GM12878 (cell line): ENCODE measurements at regions of chr9 and their contacts with region 1.

Region 1: DNA sequence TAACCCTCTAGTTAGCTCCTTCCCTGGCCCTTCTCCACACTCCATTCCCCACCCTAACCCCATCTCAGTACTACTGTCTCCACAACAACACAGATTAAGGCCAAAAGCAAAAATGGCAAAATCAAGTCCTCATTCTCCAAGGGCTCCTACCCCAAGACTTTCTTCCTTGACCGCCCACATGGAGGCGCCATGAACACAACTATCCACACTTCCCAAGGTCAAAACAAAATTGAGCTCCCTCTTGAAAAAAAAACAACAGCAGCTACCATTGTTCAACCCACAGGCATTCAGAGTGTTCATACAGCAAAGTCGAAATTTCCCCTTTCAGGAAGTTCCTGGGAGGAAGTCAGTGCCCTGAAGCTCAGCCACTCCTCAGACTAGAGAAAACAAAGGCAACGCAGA is 54.4 kb downstream of the GNAQ start:
- DNase-seq: no peak
- ATAC-seq: peak; percentile 44
- H3K4me3 ChIP-seq: no peak overlapping the region
- H3K27ac ChIP-seq: no peak overlapping the region
- H3K4me1 ChIP-seq: no peaks in the 10 kb centered on the region
- H3K27me3 ChIP-seq: 0 out of 4 replicates have a peak, but pooled peaks cover 0 to 2% of the 10 kb centered on the region in 2 experiments
- CTCF ChIP-seq: peak; percentile 24 to 44 (median 35); a peak in 4 of 6 replicates
- EP300 ChIP-seq: no peak
- POLR2A ChIP-seq: no peak
- RAD21 ChIP-seq: peak; percentile 44

Region 2: DNA sequence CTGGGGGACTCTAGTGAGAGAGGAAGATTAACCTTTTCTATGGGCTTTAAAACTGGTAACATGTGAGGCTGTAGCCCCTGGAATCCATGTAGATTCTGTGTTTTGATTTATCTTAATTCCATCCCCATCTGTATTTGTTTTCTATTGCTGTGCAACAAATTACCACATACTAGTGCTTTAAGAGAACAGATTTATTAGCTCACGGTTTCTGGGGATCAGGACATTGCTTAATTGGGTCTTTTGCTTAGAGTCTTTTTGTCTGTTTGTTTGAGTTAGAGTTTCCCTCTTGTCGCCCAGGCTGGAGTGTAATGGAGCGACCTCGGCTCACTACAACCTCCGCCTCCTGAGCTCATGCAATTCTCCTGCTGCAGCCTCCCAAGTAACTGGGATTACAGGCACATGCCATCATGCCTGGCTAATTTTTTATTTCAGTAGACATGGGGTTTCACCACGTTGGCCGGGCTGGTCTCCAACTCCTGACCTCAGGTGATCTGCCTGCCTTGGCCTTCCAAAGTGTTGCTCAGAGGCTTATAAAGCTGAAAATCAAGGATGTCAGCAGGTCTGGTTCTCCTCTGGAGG is 299.2 kb before region 1 on chr9:
- CTCF ChIA-PET with region 1: no interaction called
- POLR2A ChIA-PET with region 1: no interaction called
- RAD21 ChIA-PET with region 1: no interaction called
- SMC1A ChIA-PET with region 1: no interaction called
- in situ Hi-C with region 1: no loop called
- intact Hi-C with region 1: no loop called
- DNase-seq: no peak
- ATAC-seq: no peak
- H3K4me3 ChIP-seq: no peak overlapping the region
- H3K27ac ChIP-seq: no peak overlapping the region
- H3K4me1 ChIP-seq: no peaks in the 10 kb centered on the region
- H3K27me3 ChIP-seq: no peaks in the 10 kb centered on the region; a peak in 1 of 4 replicates
- CTCF ChIP-seq: no peak
- EP300 ChIP-seq: no peak
- POLR2A ChIP-seq: no peak
- RAD21 ChIP-seq: no peak

Region 3: GRCh38 chr9:77896938-77897667 is 80.1 kb before region 1 on chr9:
- CTCF ChIA-PET with region 1: interaction called, 5 read pairs
- POLR2A ChIA-PET with region 1: interaction called, 7 read pairs
- RAD21 ChIA-PET with region 1: interaction called, 29 read pairs
- SMC1A ChIA-PET with region 1: interaction called, 23 read pairs
- in situ Hi-C with region 1: no loop called
- intact Hi-C with region 1: no loop called
- DNase-seq: no peak
- ATAC-seq: peak; percentile 36
- H3K4me3 ChIP-seq: no peak overlapping the region
- H3K27ac ChIP-seq: no peak overlapping the region
- H3K4me1 ChIP-seq: no peaks in the 10 kb centered on the region
- H3K27me3 ChIP-seq: no peaks in the 10 kb centered on the region
- CTCF ChIP-seq: peak in 2 of 3 experiments; percentile 6 to 7; a peak in 1 of 6 replicates
- EP300 ChIP-seq: no peak
- POLR2A ChIP-seq: no peak
- RAD21 ChIP-seq: no peak

Region 4: DNA sequence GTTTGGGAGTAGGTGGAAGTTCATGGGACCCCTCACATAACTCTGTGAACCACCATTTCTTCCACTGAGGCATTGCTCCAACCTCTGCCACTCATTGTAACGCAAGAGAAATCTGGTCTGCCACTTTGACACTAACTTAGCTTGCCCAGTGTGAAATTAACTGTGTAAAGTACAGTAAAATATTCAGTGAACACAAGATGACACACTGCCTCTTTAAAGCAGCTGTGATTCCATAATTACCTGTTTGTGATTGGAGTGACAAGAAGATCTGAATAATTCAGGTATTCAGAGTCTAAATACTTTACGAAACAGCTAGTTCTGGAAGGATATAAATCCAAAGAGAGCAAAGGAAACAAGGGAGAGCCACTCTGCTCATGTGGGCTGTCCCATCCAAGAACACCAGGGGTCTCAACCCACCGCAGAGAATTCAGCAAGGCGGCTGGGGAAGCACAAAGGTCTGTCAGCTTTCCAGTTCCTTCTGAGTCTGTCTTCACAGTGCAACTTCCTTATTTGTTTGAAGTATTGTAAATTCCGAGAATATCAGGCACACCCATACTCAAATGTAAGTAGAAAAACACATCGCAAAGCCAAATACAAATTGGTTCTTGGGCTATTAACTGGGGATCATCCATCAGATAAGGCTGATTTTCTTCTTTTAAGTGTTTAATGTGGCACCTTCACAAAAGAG is 32.5 kb before region 1 on chr9:
- CTCF ChIA-PET with region 1: interaction called, 4 read pairs
- POLR2A ChIA-PET with region 1: no interaction called
- RAD21 ChIA-PET with region 1: interaction called, 15 read pairs
- SMC1A ChIA-PET with region 1: interaction called, 19 read pairs
- in situ Hi-C with region 1: no loop called
- intact Hi-C with region 1: no loop called
- DNase-seq: no peak
- ATAC-seq: peak; percentile 27
- H3K4me3 ChIP-seq: no peak overlapping the region
- H3K27ac ChIP-seq: no peak overlapping the region
- H3K4me1 ChIP-seq: no peaks in the 10 kb centered on the region
- H3K27me3 ChIP-seq: no peaks in the 10 kb centered on the region
- CTCF ChIP-seq: no peak
- EP300 ChIP-seq: no peak
- POLR2A ChIP-seq: no peak
- RAD21 ChIP-seq: no peak

Region 5: GRCh38 chr9:77965445-77966123 is 11.6 kb before region 1 on chr9:
- CTCF ChIA-PET with region 1: interaction called, 10 read pairs
- POLR2A ChIA-PET with region 1: interaction called, 3 read pairs
- RAD21 ChIA-PET with region 1: interaction called, 13 read pairs
- SMC1A ChIA-PET with region 1: interaction called, 9 read pairs
- in situ Hi-C with region 1: no loop called
- intact Hi-C with region 1: no loop called
- DNase-seq: no peak
- ATAC-seq: peak; percentile 54
- H3K4me3 ChIP-seq: no peak overlapping the region
- H3K27ac ChIP-seq: no peak overlapping the region
- H3K4me1 ChIP-seq: no peaks in the 10 kb centered on the region
- H3K27me3 ChIP-seq: 0 out of 4 replicates have a peak, but pooled peaks cover 0 to 3% of the 10 kb centered on the region in 2 experiments
- CTCF ChIP-seq: no peak
- EP300 ChIP-seq: no peak
- POLR2A ChIP-seq: no peak
- RAD21 ChIP-seq: no peak

Region 6: DNA sequence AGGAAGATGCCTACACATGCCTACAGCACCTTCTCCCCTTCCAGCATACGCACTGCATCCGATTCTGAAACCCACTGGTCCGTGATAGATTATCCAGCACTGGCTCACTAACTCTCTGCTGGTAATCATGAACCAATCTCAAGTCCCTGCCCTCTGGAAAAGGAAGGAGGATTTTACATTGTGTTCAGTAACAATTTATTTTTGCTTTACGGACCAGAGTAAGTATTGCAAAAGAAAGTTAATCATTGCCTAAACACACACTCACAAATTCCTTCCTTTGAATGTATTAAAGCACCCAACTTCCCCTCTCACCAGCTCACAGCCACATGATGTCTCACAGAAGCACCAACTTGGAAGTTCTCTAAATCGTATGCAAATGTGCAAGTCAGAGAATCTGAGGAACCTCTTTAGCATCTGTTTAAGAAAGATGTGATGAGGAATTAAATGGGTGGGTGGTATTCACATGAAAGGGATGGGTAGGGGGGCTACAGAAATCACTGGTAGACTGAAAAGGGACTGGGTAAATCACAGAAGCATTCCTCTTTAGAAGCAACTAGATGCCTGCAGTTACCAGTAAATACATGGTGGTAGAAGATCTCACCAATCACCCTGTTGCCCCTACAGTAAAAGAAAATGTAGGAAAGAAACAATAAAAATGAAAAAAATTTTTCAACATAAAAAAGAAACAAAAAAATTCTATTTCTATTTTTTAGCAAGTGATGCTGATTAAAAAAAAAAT is 46.0 kb after region 1 on chr9:
- CTCF ChIA-PET with region 1: interaction called, 15 read pairs
- POLR2A ChIA-PET with region 1: interaction called, 6 read pairs
- RAD21 ChIA-PET with region 1: interaction called, 11 read pairs
- SMC1A ChIA-PET with region 1: interaction called, 38 read pairs
- in situ Hi-C with region 1: no loop called
- intact Hi-C with region 1: no loop called
- DNase-seq: no peak
- ATAC-seq: peak; percentile 54
- H3K4me3 ChIP-seq: no peak overlapping the region
- H3K27ac ChIP-seq: no peak overlapping the region
- H3K4me1 ChIP-seq: no peaks in the 10 kb centered on the region
- H3K27me3 ChIP-seq: no peaks in the 10 kb centered on the region; a peak in 2 of 4 replicates
- CTCF ChIP-seq: no peak
- EP300 ChIP-seq: 0 out of 4 replicates have a peak, but pooled peaks of 1 of the 2 experiments have one; percentile 11
- POLR2A ChIP-seq: no peak
- RAD21 ChIP-seq: no peak

Region 7: DNA sequence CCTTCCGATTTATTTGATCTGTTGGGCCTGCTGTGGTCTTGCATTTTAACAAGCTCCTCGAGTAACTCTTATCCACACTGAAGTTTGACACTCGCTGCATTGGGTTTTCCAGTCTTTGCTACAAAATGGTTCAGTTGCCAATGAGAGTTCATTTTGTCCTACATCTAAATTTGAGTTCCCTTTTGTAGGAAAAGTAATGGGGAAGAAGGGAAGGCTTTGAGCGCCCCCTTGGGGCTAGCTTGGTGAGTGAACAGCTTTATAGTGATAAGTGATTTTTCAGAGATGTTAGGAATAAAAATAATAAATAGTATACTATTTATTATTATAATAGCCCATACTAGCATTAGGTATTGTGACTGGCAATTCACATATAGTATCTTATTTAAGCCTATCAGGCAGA is 144.3 kb after region 1 on chr9:
- CTCF ChIA-PET with region 1: interaction called, 53 read pairs
- POLR2A ChIA-PET with region 1: interaction called, 3 read pairs
- RAD21 ChIA-PET with region 1: interaction called, 22 read pairs
- SMC1A ChIA-PET with region 1: interaction called, 24 read pairs
- in situ Hi-C with region 1: no loop called
- intact Hi-C with region 1: loop called (anchors 5 kb)
- DNase-seq: no peak
- ATAC-seq: peak; percentile 22; the same call in 1 of the 3 replicates
- H3K4me3 ChIP-seq: no peak overlapping the region
- H3K27ac ChIP-seq: no peak overlapping the region
- H3K4me1 ChIP-seq: peaks cover 7% of the 10 kb centered on the region; the same call in 1 of the 2 replicates
- H3K27me3 ChIP-seq: no peaks in the 10 kb centered on the region
- CTCF ChIP-seq: peak; percentile 49 to 57 (median 53)
- EP300 ChIP-seq: no peak
- POLR2A ChIP-seq: no peak
- RAD21 ChIP-seq: peak; percentile 70

Region 8: DNA sequence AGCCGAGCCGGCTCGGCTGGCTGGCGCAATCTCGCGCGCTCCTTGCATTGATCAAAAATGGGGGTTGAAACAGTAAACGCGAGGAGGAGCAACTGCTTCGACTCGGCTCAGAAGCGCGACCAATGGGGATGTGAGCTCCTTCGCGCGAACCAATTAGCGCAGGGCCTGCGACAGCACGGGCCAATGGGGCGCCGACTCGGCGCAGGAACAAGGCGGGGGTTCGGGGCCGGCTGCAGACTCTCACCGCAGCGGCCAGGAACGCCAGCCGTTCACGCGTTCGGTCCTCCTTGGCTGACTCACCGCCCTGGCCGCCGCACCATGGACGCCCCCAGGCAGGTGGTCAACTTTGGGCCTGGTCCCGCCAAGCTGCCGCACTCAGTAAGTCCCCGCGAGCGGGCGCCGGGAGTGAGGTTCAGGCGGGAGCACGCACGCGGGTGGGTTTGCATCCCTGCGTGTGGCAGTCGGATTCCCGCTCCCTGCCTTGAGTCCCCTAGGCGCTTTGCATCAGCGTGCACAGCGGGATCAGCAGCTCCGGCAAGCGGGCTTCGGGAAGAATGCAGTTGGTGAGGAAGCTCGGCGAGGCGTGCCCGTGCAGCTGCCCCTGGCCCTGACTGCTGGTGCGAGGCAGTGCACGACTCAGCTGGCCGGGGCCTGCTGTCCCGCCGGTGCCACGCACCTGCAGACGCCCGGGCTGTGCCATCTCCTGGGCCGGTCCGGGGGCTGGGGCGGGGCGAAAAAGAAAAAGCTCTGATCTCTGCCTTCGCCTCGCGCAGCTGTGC is 319.9 kb after region 1 on chr9 and contains the start of gene PSAT1:
- CTCF ChIA-PET with region 1: no interaction called
- POLR2A ChIA-PET with region 1: no interaction called
- RAD21 ChIA-PET with region 1: no interaction called
- SMC1A ChIA-PET with region 1: no interaction called
- in situ Hi-C with region 1: no loop called
- intact Hi-C with region 1: no loop called
- DNase-seq: peak; percentile 72
- ATAC-seq: peak; percentile 98
- H3K4me3 ChIP-seq: peak within 1 kb of the TSS; percentile 83
- H3K27ac ChIP-seq: peak within 1 kb of the TSS; percentile 69
- H3K4me1 ChIP-seq: peaks cover 7% of the 10 kb centered on the region
- H3K27me3 ChIP-seq: no peaks in the 10 kb centered on the region
- CTCF ChIP-seq: peak in 1 of 3 experiments; percentile 19; a peak in 2 of 6 replicates
- EP300 ChIP-seq: no peak
- POLR2A ChIP-seq: peak; percentile 92
- RAD21 ChIP-seq: no peak
- polyA plus RNA-seq, gene PSAT1: 53.6 to 70.2 TPM